ENCODE measurements at regions of chr15 and their contacts with region 1.

Region 1: DNA sequence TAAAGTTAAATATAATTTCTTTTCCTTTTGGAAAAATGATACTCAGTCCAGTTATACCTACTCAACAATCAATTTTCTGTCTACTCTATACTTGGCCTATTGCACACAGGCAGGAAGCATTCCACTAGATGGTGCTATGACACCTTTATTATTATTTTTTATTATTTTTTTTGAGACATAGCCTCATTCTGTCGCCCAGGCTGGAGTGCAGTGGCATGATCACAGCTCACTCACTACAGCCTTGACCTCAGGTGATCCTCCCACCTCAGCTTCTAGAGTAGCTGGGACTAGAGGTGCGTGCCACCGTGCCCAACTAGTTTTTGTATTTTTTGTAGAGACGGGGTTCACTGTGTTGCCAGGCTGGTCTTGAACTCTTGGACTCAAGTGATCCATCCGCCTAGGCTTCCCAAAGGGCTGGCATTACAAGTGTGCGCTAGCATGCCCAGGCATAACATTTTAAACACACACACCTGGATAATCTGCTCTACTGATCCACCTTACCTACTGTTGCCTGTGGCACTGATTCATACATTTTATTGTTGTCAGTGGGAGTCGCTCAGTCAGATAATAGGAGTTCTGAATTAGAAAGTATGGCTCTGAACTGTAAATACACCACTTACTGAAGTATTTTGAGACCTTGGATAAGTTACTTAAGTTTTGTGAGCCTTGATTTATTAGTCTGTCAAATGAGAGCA is 56.2 kb downstream of the EIF3J start:
- DNase-seq: peak in 4 of 9 experiments; percentile 12 to 70 (median 53)
- ATAC-seq: peak; percentile 73
- H3K4me3 ChIP-seq: no peak overlapping the region
- H3K4me3 Mint-ChIP-seq: no peak overlapping the region
- H3K27ac ChIP-seq: no peak overlapping the region
- H3K27ac Mint-ChIP-seq: peak overlapping the region; percentile 57
- H3K4me1 ChIP-seq: peaks cover 5% of the 10 kb centered on the region
- H3K4me1 Mint-ChIP-seq: peaks cover 9% of the 10 kb centered on the region
- H3K27me3 ChIP-seq: no peaks in the 10 kb centered on the region
- H3K27me3 Mint-ChIP-seq: no peaks in the 10 kb centered on the region
- CTCF ChIP-seq: peak; percentile 75

Region 2: DNA sequence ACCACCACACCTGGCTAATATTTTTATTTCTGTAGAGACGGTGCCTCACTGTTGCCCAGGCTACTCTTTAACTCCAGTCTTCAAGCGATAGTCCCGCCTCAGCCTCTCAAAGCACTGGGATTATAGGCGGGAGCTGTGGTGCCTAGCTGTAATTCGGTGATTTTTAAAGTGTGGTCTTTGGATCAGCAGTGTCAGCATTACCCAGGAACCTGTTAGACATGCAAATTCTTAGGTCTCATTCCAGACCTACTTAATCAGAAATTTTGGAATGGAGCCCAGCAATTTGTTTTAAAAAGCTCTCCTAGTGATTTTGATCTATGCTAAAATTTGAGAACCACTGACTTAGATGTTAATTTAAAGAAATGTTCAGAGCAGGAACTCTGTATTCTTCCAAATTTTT is 252.8 kb before region 1 on chr15:
- CTCF ChIA-PET with region 1: no interaction called
- POLR2A ChIA-PET with region 1: no interaction called
- intact Hi-C with region 1: no loop called
- DNase-seq: no peak
- ATAC-seq: no peak
- H3K4me3 ChIP-seq: no peak overlapping the region
- H3K4me3 Mint-ChIP-seq: no peak overlapping the region
- H3K27ac ChIP-seq: no peak overlapping the region
- H3K27ac Mint-ChIP-seq: no peak overlapping the region
- H3K4me1 ChIP-seq: no peaks in the 10 kb centered on the region
- H3K4me1 Mint-ChIP-seq: no peaks in the 10 kb centered on the region
- H3K27me3 ChIP-seq: no peaks in the 10 kb centered on the region
- H3K27me3 Mint-ChIP-seq: no peaks in the 10 kb centered on the region
- CTCF ChIP-seq: no peak

Region 3: DNA sequence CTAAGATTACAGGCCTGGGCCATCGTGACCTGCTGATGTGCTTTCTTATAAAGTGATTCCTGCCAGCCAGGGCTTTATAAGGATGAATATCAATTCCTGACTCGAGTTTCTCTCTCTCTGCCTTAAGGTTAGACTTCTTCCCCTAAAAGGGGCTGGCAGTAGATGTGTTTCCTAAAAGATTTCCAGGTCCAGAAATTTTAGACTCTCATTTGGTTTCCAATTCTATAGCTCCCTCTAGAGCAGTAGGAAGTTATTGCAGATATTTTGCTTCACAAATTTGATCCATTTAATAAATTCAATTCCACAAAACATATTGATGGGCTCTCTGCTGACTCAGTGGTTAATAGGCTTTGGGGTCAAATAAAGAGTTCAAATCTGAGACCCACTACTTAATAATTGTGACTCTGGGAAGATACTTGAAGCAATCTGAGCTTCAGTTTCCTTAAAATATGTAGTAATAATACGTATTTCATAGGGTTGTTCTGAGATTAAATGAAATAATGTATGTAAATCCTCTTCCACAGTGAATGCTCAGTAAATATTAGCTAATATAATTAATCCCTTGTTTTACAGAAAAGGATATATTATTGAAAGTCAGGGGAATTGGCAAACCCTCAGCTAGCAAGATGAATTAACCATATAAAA is 145.3 kb after region 1 on chr15:
- CTCF ChIA-PET with region 1: interaction called, 19 read pairs
- POLR2A ChIA-PET with region 1: no interaction called
- intact Hi-C with region 1: loop called (anchors 2 kb)
- DNase-seq: peak in 2 of 9 experiments; percentile 69 to 78
- ATAC-seq: no peak
- H3K4me3 ChIP-seq: no peak overlapping the region
- H3K4me3 Mint-ChIP-seq: peak overlapping the region; percentile 15
- H3K27ac ChIP-seq: peak overlapping the region in 1 of 2 experiments; percentile 91
- H3K27ac Mint-ChIP-seq: peak overlapping the region; percentile 78
- H3K4me1 ChIP-seq: peaks cover 50% of the 10 kb centered on the region
- H3K4me1 Mint-ChIP-seq: peaks cover 57% of the 10 kb centered on the region
- H3K27me3 ChIP-seq: no peaks in the 10 kb centered on the region
- H3K27me3 Mint-ChIP-seq: no peaks in the 10 kb centered on the region
- CTCF ChIP-seq: peak; percentile 78

Region 4: DNA sequence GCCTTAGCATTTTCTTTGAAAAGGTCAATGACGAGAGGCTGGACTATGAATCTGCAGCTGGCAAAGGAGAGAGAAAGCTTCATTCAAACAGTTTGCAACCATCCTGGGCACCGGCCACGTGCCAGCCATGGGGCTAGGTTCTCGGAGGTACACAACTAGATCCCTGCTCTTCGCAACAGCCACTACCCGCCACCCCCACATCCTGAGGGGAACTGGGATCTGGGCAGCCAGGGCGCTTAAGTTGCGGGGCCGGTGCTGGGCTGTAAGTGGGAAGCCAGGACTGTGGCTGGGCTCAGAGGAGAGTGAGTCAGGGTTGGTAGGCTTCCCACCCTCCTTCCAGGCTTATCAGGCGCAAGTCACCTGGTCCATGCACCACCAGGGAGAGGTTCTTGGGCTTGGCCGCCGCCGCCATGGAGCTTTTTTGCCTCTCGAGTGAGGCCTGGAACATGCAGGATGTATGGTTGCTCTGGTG is 268.3 kb after region 1 on chr15:
- CTCF ChIA-PET with region 1: no interaction called
- POLR2A ChIA-PET with region 1: no interaction called
- intact Hi-C with region 1: loop called (anchors 10 kb)
- DNase-seq: no peak
- ATAC-seq: no peak
- H3K4me3 ChIP-seq: no peak overlapping the region
- H3K4me3 Mint-ChIP-seq: no peak overlapping the region
- H3K27ac ChIP-seq: no peak overlapping the region
- H3K27ac Mint-ChIP-seq: no peak overlapping the region
- H3K4me1 ChIP-seq: no peaks in the 10 kb centered on the region
- H3K4me1 Mint-ChIP-seq: no peaks in the 10 kb centered on the region
- H3K27me3 ChIP-seq: no peaks in the 10 kb centered on the region
- H3K27me3 Mint-ChIP-seq: no peaks in the 10 kb centered on the region
- CTCF ChIP-seq: no peak

Region 5: GRCh38 chr15:44918136-44918535 is 324.9 kb after region 1 on chr15:
- CTCF ChIA-PET with region 1: no interaction called
- POLR2A ChIA-PET with region 1: no interaction called
- intact Hi-C with region 1: loop called in 1 of 2 experiments (anchors 5 kb)
- DNase-seq: no peak
- ATAC-seq: no peak
- H3K4me3 ChIP-seq: no peak overlapping the region
- H3K4me3 Mint-ChIP-seq: no peak overlapping the region
- H3K27ac ChIP-seq: no peak overlapping the region
- H3K27ac Mint-ChIP-seq: no peak overlapping the region
- H3K4me1 ChIP-seq: no peaks in the 10 kb centered on the region
- H3K4me1 Mint-ChIP-seq: no peaks in the 10 kb centered on the region
- H3K27me3 ChIP-seq: no peaks in the 10 kb centered on the region
- H3K27me3 Mint-ChIP-seq: no peaks in the 10 kb centered on the region
- CTCF ChIP-seq: no peak

Region 6: DNA sequence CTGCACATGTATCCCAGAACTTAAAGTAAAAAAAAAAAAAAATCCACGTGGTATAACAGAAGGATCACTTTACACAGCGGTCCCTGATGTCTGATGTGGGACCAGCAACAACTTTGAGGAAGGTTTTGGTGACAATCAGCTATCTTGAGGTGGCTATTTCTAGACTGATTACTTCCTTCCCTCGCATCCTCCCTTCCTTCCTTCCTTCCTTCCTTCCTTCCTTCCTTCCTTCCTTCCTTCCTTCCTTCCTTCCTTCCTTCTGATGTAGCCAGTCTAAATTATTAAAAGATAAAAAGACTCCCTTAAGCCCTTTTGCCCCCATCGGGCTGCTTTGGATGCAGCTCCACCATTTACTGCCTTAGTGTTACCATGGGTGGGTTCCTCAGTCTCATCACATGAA is 444.7 kb after region 1 on chr15:
- CTCF ChIA-PET with region 1: interaction called, 3 read pairs
- POLR2A ChIA-PET with region 1: no interaction called
- intact Hi-C with region 1: loop called (anchors 1 to 2 kb)
- DNase-seq: no peak
- ATAC-seq: no peak
- H3K4me3 ChIP-seq: no peak overlapping the region
- H3K4me3 Mint-ChIP-seq: no peak overlapping the region
- H3K27ac ChIP-seq: no peak overlapping the region
- H3K27ac Mint-ChIP-seq: no peak overlapping the region
- H3K4me1 ChIP-seq: peaks cover 4% of the 10 kb centered on the region
- H3K4me1 Mint-ChIP-seq: peaks cover 16% of the 10 kb centered on the region
- H3K27me3 ChIP-seq: no peaks in the 10 kb centered on the region
- H3K27me3 Mint-ChIP-seq: no peaks in the 10 kb centered on the region
- CTCF ChIP-seq: no peak

Region 7: GRCh38 chr15:45118131-45118588 is 525.0 kb after region 1 on chr15:
- CTCF ChIA-PET with region 1: no interaction called
- POLR2A ChIA-PET with region 1: no interaction called
- intact Hi-C with region 1: loop called in 1 of 2 experiments (anchors 5 kb)
- DNase-seq: peak; percentile 67 to 90 (median 85)
- ATAC-seq: peak; percentile 99
- H3K4me3 ChIP-seq: peak overlapping the region; percentile 33 to 38
- H3K4me3 Mint-ChIP-seq: peak overlapping the region; percentile 78
- H3K27ac ChIP-seq: no peak overlapping the region
- H3K27ac Mint-ChIP-seq: no peak overlapping the region
- H3K4me1 ChIP-seq: peaks cover 35% of the 10 kb centered on the region
- H3K4me1 Mint-ChIP-seq: peaks cover 33% of the 10 kb centered on the region
- H3K27me3 ChIP-seq: peaks cover 18 to 31% of the 10 kb centered on the region in 2 experiments
- H3K27me3 Mint-ChIP-seq: peaks cover 70% of the 10 kb centered on the region
- CTCF ChIP-seq: peak; percentile 100

Measured in CD8-positive, alpha-beta T cell (primary cell).